OCI-LY7 (cell line): ENCODE measurements at regions of chr1 and their contacts with region 1.

Region 1: DNA sequence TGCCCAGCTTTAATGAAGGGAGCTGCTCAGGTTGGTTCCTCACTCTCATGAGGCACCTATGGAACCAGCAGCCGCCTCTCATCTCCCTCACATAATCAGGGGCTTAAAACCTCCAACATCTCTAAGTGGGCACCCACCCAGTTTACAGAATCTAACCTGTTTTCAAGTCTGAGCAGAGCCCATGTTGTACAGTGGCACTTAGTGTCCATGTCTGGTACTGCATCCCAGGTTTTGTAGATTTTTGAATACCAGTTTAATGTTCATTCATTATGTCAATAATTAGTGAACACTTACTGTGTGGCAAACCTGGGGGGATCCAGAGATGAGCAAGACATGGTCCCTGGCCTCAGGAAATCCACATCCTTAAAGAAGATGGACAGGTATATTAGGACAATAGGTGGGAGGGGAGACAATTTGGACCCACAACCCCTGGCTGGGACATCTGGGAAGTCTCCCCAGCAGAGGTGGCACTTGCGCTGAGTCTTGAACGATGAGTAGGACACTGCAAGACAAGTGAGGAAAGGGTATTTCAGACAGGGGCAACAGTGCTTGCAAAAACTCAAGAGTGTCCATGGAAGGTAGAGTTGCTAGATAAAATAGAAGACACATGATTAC is 83.3 kb downstream of the LACTBL1 start:
- DNase-seq: peak; percentile 47
- H3K4me3 ChIP-seq: no peak overlapping the region
- H3K27ac ChIP-seq: no peak overlapping the region
- H3K4me1 ChIP-seq: no peaks in the 10 kb centered on the region
- CTCF ChIP-seq: peak; percentile 87

Region 2: DNA sequence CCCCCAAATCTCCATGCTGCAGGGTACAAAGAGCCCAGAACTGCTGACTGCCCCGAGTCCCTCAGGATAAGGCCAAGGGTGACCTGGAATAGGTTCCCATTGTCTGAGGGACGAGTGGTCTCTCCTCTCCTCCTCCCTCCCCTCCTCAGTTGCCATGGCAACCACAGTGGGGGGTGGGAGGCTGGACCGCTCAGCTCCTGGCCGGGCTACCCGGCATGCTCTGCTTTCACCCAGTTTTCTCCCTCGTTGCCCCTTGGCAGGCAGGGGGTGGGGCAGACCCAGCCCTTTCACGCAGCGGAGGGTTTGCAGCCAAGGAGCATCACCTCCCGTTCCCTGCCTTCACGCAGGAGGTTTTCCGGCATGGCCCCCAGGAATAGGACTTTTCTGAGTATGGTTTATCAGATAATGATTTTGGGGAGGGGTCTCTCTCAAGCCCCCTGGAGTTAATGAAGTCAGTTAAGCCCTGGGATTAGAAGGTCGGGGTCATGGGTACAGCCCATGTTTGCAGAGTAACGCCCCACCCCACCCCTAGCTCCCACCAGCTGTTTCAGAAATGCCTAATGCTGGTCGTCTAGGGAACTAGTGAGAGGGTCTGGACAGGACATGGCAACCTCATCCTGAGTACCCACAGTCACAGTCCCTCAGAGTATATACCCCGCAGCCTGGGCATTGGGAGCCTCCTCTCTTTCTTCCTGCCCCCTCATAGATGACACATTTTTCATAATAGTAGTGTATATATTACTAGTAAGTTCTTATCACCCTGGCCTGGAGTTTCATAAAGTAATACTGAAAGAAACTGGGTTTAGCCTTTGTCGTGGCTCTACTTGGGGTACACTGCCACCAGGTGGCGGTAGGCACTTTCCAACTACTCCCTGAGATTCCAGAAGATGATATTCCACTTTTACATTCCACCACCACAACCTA is 215.6 kb before region 1 on chr1:
- CTCF ChIA-PET with region 1: no interaction called
- POLR2A ChIA-PET with region 1: no interaction called
- intact Hi-C with region 1: loop called (anchors 1 kb)
- DNase-seq: peak; percentile 36
- H3K4me3 ChIP-seq: no peak overlapping the region
- H3K27ac ChIP-seq: no peak overlapping the region
- H3K4me1 ChIP-seq: no peaks in the 10 kb centered on the region
- CTCF ChIP-seq: peak; percentile 94

Region 3: GRCh38 chr1:22704440-22705067 is 184.8 kb before region 1 on chr1:
- CTCF ChIA-PET with region 1: no interaction called
- POLR2A ChIA-PET with region 1: no interaction called
- intact Hi-C with region 1: loop called (anchors 1 kb)
- DNase-seq: peak; percentile 75
- H3K4me3 ChIP-seq: no peak overlapping the region
- H3K27ac ChIP-seq: no peak overlapping the region
- H3K4me1 ChIP-seq: no peaks in the 10 kb centered on the region
- CTCF ChIP-seq: peak; percentile 81

Region 4: GRCh38 chr1:22870201-22870871 is 19.0 kb before region 1 on chr1:
- CTCF ChIA-PET with region 1: no interaction called
- POLR2A ChIA-PET with region 1: no interaction called
- intact Hi-C with region 1: no loop called
- DNase-seq: no peak
- H3K4me3 ChIP-seq: no peak overlapping the region
- H3K27ac ChIP-seq: no peak overlapping the region
- H3K4me1 ChIP-seq: no peaks in the 10 kb centered on the region
- CTCF ChIP-seq: no peak